ENCODE measurements at regions of chr3 and their contacts with region 1.

Region 1: GRCh38 chr3:107676469-107677309 is 153.9 kb downstream of the BBX start:
- DNase-seq: no peak
- H3K4me3 Mint-ChIP-seq: no peak overlapping the region
- H3K27ac Mint-ChIP-seq: no peak overlapping the region
- H3K4me1 Mint-ChIP-seq: peaks cover 23% of the 10 kb centered on the region
- H3K27me3 Mint-ChIP-seq: no peaks in the 10 kb centered on the region

Region 2: GRCh38 chr3:107660306-107660976 is 16.2 kb before region 1 on chr3:
- CTCF ChIA-PET with region 1: interaction called, 40 read pairs
- POLR2A ChIA-PET with region 1: no interaction called
- intact Hi-C with region 1: no loop called
- DNase-seq: no peak
- H3K4me3 Mint-ChIP-seq: no peak overlapping the region
- H3K27ac Mint-ChIP-seq: no peak overlapping the region
- H3K4me1 Mint-ChIP-seq: peaks cover 23% of the 10 kb centered on the region
- H3K27me3 Mint-ChIP-seq: no peaks in the 10 kb centered on the region

Region 3: DNA sequence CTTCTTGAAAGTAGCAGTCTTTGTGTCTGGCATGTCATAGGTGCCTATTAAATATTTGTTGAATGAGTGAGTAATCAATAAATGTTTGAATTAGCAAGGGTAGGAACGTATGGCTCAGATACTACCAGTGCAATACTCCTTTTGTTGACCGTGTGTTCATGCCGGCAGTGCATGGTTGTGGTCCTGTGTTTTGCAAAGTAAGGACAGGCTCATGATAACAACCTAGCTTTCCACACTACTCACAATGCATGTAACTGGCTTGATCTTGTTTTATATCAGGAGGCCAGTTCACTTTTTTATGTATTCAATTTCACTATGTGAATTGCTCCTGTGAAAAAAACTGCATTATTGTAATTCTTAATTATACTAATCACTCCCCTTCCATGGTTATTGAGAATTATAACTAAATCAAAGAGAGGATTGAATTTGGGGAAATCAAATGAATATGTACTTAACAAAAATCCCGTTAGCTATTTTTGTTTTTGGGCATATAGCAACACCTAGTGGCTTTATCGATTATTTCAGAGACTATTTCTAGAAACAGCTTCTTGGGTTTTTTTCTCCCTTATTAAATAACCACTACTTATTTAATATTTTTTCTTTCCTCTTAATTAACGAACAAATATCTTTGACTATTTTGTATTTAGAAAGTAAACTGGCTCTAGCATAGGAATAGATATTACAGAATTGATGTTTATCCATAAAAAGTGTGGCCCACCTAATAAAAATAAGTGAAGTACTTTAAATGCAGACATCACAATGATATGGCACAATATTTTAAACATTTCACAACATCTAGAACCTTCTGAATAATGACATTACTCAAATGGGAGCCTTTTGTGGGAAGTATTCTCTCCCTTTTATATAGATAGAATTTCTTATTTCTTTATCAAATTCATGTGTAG is 64.6 kb after region 1 on chr3:
- CTCF ChIA-PET with region 1: interaction called, 82 read pairs
- POLR2A ChIA-PET with region 1: no interaction called
- intact Hi-C with region 1: loop called (anchors 1 kb)
- DNase-seq: no peak
- H3K4me3 Mint-ChIP-seq: no peak overlapping the region
- H3K27ac Mint-ChIP-seq: no peak overlapping the region
- H3K4me1 Mint-ChIP-seq: no peaks in the 10 kb centered on the region
- H3K27me3 Mint-ChIP-seq: no peaks in the 10 kb centered on the region

Region 4: DNA sequence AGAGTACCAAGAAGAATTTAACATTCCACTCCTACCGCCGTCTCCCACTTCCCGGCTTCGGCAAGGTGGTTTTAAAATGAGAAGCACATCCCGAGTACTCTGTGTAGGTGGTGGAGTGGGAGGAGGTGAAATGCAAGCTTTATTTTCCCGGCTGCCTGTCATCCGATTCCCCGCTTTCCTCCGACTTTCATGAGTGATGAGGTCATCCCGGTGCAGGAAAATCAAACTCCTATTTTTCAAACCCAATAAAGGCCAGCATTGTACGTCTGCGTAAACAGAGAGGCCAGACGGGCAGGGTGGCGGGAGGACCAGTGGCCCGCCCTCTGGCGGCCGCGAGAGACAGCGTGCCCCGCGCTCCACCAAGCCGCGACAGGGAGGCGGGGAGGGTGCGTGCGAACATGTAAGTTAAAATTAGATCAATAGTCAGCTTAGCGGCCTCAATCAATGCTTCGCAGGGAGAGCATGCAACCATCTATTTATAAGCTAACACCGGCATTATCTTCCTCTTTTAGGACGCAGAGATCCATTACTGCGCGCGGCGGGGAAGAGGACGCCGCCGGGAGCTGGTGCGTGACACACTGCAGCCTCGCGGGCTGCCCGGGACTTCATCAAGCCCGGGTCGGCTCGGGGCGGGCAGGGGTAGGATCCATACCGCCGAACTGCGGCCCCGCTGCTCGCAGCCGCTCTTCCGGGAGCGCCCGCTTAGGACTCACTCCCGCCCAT is 250.8 kb after region 1 on chr3:
- CTCF ChIA-PET with region 1: interaction called, 15 read pairs
- POLR2A ChIA-PET with region 1: no interaction called
- intact Hi-C with region 1: loop called (anchors 10 kb)
- DNase-seq: peak; percentile 81
- H3K4me3 Mint-ChIP-seq: peak overlapping the region; percentile 72
- H3K27ac Mint-ChIP-seq: no peak overlapping the region
- H3K4me1 Mint-ChIP-seq: peaks cover 10% of the 10 kb centered on the region
- H3K27me3 Mint-ChIP-seq: peaks cover 5% of the 10 kb centered on the region